Gastrocnemius medialis (tissue), 4 donors: ENCODE measurements at regions of chr4 and their contacts with region 1.

Region 1: DNA sequence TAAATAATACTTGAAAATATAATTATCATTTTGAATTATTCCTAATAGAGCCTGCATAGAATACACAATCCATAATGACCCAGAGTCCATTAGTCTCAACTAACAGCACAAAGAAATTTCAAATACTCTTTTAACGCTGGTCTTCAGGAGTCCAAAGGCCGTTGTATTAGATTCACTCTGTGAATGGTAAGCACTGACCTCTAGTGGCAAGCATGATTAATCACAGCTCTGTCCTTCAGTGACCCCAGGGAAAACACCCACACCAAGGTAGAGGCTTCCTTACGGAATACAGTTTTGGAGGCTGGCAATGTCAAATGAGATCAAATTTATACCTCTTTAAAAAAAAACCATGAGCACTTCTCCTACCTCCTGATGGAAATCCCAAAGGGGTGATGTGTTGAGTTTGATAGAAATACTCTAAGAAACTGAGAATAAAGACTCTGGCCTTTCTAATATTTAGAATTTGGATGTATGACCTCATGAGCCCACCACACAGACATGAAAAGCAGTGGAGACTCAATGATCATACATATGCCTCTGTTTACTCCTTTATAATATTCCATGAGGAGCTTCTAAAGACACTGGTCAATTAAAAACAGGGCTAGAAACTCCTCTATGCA is 147.2 kb upstream of the DKK2 start:
- DNase-seq: peak in 1 of 2 donors; percentile 11
- ATAC-seq: peak; percentile 96 to 97
- H3K4me3 ChIP-seq: no peak overlapping the region
- H3K27ac ChIP-seq: no peak overlapping the region
- H3K4me1 ChIP-seq: no peaks in the 10 kb centered on the region
- H3K27me3 ChIP-seq: no peaks in the 10 kb centered on the region
- CTCF ChIP-seq: peak; percentile 73 to 83 (median 82)
- POLR2A ChIP-seq: no peak

Region 2: DNA sequence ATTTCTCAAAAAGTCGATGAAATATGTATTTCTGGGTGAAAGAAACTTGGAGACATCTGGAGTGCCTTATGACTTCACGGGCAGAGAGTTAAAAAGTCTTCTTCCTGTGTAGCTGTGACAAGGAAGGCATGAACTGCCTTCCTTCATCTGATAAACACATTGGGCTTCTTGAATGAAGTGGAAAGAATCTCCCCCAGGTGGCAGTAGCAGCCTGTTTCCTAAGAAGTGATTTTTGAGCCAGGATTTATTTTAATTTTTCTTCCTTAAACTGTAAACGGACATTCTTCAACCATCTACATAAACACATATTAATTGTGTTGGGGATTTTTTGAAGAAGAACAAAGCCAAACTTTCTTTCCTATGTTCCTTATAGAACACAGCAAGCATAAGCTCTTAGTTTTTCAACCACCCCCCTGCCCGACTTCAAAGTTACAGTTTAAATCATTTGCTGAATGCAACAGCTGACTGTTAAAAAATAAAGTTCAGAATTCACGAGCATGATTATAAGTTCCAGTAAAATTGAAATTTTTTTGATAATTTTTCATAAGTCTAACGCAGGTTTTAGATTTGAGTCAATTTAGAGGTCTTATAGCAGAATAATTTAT is 813.7 kb before region 1 on chr4:
- in situ Hi-C with region 1: loop called in 1 of 4 experiments (anchors 25 kb)
- intact Hi-C with region 1: loop called (anchors 10 kb)
- DNase-seq: no peak
- ATAC-seq: no peak
- H3K4me3 ChIP-seq: no peak overlapping the region
- H3K27ac ChIP-seq: no peak overlapping the region
- H3K4me1 ChIP-seq: peaks cover 6 to 9% of the 10 kb centered on the region in 2 donors
- H3K27me3 ChIP-seq: no peaks in the 10 kb centered on the region
- CTCF ChIP-seq: peak in 4 of 5 experiments; percentile 29 to 60 (median 44)
- POLR2A ChIP-seq: no peak

Region 3: DNA sequence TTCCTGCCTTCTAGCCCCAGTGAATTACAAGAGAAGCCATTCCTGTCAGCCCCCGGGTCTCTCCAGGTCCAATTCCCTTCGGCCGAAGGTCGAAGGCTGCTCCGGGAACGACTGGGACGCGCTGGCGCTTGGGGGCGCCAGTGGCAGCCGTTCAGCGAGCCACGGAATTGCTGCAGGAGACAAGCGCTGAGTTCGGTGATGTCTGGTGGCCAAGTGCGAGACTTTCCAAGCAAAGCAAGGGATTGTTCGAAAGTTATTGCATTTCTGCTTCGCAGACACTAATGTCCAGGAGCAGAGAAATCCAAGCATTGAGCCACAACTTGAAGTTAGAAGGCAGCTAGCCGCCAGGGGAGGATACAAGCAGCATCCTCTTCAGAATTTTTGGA is 146.1 kb before region 1 on chr4:
- in situ Hi-C with region 1: loop called (anchors 5 to 10 kb)
- intact Hi-C with region 1: loop called (anchors 1 kb)
- DNase-seq: peak; percentile 5 to 27
- ATAC-seq: peak; percentile 51 to 61
- H3K4me3 ChIP-seq: peak overlapping the region; percentile 52 to 67 (median 58)
- H3K27ac ChIP-seq: no peak overlapping the region
- H3K4me1 ChIP-seq: peaks cover 28 to 32% of the 10 kb centered on the region in 2 donors
- H3K27me3 ChIP-seq: peaks cover 14 to 45% (median 27%) of the 10 kb centered on the region in 3 donors
- CTCF ChIP-seq: peak in 2 of 5 experiments; percentile 31 to 52
- POLR2A ChIP-seq: no peak

Region 4: GRCh38 chr4:107044170-107044569 is 139.1 kb before region 1 on chr4:
- in situ Hi-C with region 1: loop called (anchors 5 to 10 kb)
- intact Hi-C with region 1: no loop called
- DNase-seq: no peak
- ATAC-seq: no peak
- H3K4me3 ChIP-seq: no peak overlapping the region
- H3K27ac ChIP-seq: no peak overlapping the region
- H3K4me1 ChIP-seq: no peaks in the 10 kb centered on the region
- H3K27me3 ChIP-seq: peaks cover 0 to 8% (median 0%) of the 10 kb centered on the region in 3 donors
- CTCF ChIP-seq: no peak
- POLR2A ChIP-seq: no peak

Region 5: GRCh38 chr4:107094332-107094731 is 88.9 kb before region 1 on chr4:
- in situ Hi-C with region 1: loop called in 1 of 4 experiments (anchors 10 kb)
- intact Hi-C with region 1: loop called (anchors 2 kb)
- DNase-seq: no peak
- ATAC-seq: peak in 1 of 2 donors; percentile 52
- H3K4me3 ChIP-seq: no peak overlapping the region
- H3K27ac ChIP-seq: no peak overlapping the region
- H3K4me1 ChIP-seq: peaks cover 10 to 14% of the 10 kb centered on the region in 2 donors
- H3K27me3 ChIP-seq: no peaks in the 10 kb centered on the region
- CTCF ChIP-seq: peak in 3 of 5 experiments; percentile 18 to 40 (median 24)
- POLR2A ChIP-seq: no peak